Dorsolateral prefrontal cortex (tissue), 120 donors: ENCODE measurements at regions of chr5 and their contacts with region 1.

Region 1: GRCh38 chr5:95961617-95962474 is at the start of gene ELL2:
- DNase-seq: peak; percentile 90 to 98 (median 96)
- H3K4me3 ChIP-seq: peak within 1 kb of the TSS; percentile 58 to 99 (median 91)
- H3K27ac ChIP-seq: peak within 1 kb of the TSS; percentile 84 to 99 (median 97)
- H3K27me3 ChIP-seq: no peaks in the 10 kb centered on the region
- CTCF ChIP-seq: peak in 4 of 56 donors; percentile 5 to 37 (median 29)
- total RNA-seq, gene ELL2: 53.4 to 211 (median 88.7) TPM

Region 2: DNA sequence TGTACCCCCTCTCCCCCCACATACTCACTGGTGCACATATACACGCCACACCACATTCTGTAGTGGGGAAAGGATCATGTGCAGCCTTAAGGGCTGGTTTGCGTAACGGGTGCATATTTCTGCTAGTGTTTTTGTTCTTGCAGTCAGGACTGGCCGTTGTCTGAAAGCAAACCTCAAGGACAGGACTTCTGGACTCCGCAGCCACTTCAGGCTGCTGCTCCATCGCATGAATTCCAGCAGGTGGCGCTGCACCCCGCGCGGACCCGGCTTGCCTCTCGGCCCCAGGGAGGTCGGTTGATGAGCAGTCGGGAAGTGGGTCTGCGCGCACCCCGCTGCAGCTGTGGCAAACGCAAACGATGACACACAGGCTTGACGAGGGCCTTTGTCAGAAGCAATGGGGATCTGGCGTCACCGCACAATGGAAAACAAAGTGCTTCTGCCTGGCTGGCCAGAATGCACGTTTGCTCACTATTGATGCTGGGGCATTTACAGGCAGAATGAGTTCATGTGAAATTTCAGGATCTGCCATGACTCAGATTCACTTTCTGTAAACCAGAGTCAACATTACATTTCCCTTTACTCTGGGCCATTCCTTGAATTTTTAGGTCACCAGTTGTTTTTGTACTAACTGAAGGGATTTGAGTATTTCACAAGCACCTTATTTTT is 103.1 kb before region 1 on chr5:
- intact Hi-C with region 1: loop called (anchors 1 to 2 kb)
- DNase-seq: peak; percentile 87 to 97 (median 94)
- H3K4me3 ChIP-seq: peak overlapping the region in 54 of 59 donors; percentile 1 to 61 (median 40)
- H3K27ac ChIP-seq: peak overlapping the region in 58 of 59 donors; percentile 61 to 97 (median 88)
- H3K27me3 ChIP-seq: no peaks in the 10 kb centered on the region
- CTCF ChIP-seq: peak; percentile 96 to 100 (median 99)

Region 3: DNA sequence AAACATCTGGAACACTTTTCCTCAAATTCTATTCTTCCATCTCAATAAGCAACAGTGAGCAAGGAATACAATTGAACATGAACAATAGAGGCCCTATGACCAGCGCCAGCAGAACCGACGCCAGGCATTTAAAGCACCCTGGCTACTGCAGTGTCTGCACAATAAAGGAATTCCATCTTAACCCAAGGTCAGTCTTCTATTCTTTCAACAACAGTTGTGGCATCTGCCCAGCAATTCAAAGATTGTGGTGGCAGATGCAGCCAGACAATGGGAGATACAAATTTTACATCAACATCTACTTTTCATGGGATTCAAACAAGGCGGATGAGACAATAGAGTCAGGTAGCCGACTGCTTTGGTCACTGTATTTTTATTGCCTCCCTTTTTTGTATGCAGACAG is 66.1 kb before region 1 on chr5:
- intact Hi-C with region 1: loop called (anchors 1 to 2 kb)
- DNase-seq: peak in 7 of 10 donors; percentile 44 to 79 (median 57)
- H3K4me3 ChIP-seq: peak overlapping the region in 2 of 59 donors; percentile 23 to 33
- H3K27ac ChIP-seq: peak overlapping the region; percentile 4 to 93 (median 82)
- H3K27me3 ChIP-seq: no peaks in the 10 kb centered on the region
- CTCF ChIP-seq: peak in 7 of 56 donors; percentile 3 to 26 (median 14)

Region 4: DNA sequence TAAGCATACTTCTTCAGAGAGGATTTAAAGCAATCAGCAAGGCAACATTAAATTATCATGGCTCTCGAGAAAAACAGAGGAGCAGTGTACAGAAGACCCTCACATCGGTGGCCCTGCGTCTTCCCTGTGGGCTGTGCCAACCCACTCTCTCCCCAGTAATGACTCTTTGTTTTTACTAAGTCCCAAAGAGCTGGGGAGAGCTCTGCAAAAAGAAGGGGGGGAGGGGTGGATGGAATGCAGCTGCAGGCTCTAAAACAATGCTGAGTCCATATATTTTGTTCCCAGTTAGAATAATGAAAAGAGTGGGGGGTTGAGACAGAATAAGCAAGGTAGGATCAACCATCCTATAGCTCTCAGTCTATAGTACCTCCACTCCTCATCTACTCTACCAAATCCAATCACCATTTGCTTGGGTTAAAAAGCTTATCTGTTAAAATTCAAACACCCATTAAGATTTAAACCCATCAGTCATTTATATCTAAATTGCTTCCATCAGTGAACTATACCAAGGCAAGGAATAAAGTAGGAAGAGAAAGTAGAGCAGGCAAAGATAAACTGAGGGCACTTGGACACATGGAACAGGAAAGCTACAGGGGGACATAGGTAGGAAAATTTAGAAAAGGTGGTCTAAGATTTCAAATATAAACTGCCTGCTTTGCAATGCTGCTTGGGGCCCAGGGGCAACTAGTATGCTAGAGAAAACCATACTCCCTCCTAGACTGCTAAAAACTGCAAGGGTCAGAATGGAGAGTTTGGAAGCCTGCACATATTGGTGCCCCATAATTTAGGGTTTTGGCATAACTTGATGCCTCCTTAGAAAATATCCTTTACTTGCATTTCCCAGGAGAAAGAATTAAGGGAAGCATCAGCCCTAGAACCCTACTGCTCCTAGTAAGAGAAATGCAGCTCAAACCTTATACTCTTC is 20.8 kb before region 1 on chr5:
- intact Hi-C with region 1: loop called in 1 of 2 experiments (anchors 2 kb)
- DNase-seq: peak in 8 of 10 donors; percentile 48 to 78 (median 60)
- H3K4me3 ChIP-seq: peak overlapping the region in 31 of 59 donors; percentile 1 to 53 (median 20)
- H3K27ac ChIP-seq: peak overlapping the region; percentile 47 to 98 (median 91)
- H3K27me3 ChIP-seq: no peaks in the 10 kb centered on the region
- CTCF ChIP-seq: peak in 1 of 56 donors; percentile 8

Region 5: GRCh38 chr5:96157841-96158291 is 196.0 kb after region 1 on chr5:
- intact Hi-C with region 1: loop called in 1 of 2 experiments (anchors 5 kb)
- DNase-seq: no peak
- H3K4me3 ChIP-seq: no peak overlapping the region
- H3K27ac ChIP-seq: no peak overlapping the region
- H3K27me3 ChIP-seq: no peaks in the 10 kb centered on the region
- CTCF ChIP-seq: no peak

Region 6: DNA sequence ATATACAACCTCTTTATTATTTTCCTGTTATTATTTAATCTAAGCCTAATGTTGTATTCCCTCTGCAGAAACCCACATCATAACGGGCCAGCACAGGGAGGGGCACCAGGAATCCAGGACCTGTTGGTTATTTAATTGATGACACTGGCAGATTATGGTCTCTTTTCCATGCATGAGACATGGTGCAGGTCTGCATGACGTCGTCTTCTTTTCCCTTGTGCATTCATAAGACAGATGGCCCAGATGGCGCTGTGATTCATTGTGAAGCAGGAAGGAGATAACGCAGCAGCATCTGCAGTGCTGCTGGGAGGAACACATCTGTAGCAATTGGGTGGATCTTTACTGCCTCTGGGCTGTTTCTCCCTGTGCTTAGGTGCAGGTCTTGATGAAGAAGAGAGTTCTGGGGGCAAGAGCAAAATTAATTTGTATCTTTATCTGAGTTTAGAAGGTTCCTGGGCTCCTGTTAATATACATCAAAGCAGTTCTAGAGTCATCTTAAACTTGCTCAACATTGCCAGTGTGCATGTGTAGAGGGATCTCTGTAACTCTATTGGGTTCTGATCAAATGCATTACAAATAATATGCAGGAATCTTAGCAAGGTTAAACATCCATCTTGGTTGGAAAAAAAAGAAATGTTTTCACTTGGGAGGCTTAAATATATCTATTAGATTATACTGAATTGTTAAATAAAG is 295.1 kb after region 1 on chr5:
- intact Hi-C with region 1: loop called in 1 of 2 experiments (anchors 5 kb)
- DNase-seq: peak in 6 of 10 donors; percentile 19 to 67 (median 39)
- H3K4me3 ChIP-seq: no peak overlapping the region
- H3K27ac ChIP-seq: no peak overlapping the region
- H3K27me3 ChIP-seq: no peaks in the 10 kb centered on the region
- CTCF ChIP-seq: peak in 11 of 56 donors; percentile 13 to 34 (median 19)

Region 7: DNA sequence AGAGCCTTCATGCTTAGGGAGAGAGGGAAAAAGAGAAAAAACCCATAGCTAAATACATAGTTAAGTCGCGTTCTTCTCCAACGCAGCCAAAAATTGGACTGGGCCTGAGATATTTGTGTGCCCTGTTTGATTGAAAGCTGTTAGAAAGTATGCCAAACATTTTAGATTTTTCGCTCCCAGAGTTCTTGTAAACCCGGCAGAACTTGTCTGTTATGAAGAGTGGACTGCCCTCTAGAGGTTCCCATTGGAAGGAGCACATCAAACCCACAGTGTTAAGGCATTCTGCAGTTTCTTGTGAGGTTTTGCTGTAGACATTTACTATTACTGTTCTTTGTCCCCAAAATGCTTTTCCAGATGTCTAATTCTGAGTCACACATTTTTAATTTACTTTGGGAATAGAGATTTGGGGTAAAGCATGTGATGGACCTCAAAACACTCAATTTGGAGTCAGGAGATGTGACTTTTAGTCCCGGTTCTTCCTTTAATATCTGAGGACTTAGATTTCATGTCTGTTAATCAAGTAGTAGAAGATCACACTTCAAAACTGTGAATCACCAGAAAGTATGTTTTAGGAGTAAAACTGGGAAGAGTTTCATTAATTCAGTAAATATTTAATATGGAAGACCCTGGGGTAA is 374.6 kb after region 1 on chr5:
- intact Hi-C with region 1: loop called (anchors 5 kb)
- DNase-seq: peak in 7 of 10 donors; percentile 49 to 90 (median 60)
- H3K4me3 ChIP-seq: peak overlapping the region in 13 of 59 donors; percentile 8 to 42 (median 21)
- H3K27ac ChIP-seq: peak overlapping the region in 27 of 59 donors; percentile 0 to 73 (median 31)
- H3K27me3 ChIP-seq: no peaks in the 10 kb centered on the region
- CTCF ChIP-seq: peak; percentile 79 to 97 (median 92)

Region 8: GRCh38 chr5:96350678-96351077 is 388.8 kb after region 1 on chr5:
- intact Hi-C with region 1: no loop called
- DNase-seq: no peak
- H3K4me3 ChIP-seq: no peak overlapping the region
- H3K27ac ChIP-seq: no peak overlapping the region
- H3K27me3 ChIP-seq: no peaks in the 10 kb centered on the region
- CTCF ChIP-seq: no peak